ENCODE measurements at regions of chr3 and their contacts with region 1.

Region 1: DNA sequence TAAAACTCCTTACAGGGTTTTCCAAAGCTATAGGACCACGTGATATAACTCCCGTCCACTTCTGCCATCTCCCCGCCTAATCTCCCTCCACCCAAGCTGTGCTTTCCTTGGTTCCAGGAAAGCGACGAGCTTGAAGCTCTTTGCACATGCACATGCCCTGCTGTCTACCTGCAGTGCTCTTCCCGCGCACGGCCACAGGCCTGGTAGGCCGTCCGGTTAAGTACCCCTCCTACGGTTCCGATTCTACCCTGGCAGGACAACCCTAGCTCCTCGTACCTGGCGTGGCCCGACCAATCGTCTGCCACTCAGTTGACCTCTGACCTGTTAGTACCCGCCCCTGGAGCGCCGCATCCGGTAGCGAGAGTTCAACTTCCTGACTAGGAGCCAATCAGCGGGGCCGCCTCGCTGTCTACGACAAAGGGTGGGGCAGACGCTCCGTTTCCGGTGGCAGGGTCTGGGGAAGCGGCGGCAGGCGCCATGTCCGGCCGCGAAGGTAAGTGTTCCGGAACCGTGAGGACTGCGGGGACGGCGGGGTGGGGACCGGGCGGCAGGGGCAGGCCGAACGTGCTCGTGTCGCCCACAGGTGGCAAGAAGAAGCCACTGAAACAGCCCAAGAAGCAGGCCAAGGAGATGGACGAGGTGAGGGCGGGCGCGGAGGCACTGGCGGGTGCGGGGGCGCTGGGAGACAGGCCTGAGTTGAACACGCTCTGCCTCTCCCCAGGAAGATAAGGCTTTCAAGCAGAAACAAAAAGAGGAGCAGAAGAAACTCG is at the starts of genes CCDC51 and TMA7:
- DNase-seq: peak; percentile 95 to 96
- H3K4me3 ChIP-seq: peak within 1 kb of the TSS; percentile 96
- H3K27ac ChIP-seq: peak within 1 kb of the TSS; percentile 46
- H3K4me1 ChIP-seq: peaks cover 11% of the 10 kb centered on the region
- H3K27me3 ChIP-seq: no peaks in the 10 kb centered on the region
- CTCF ChIP-seq: no peak
- total RNA-seq, gene CCDC51: 28.5 and 35.4 TPM in 2 replicates
- total RNA-seq, gene TMA7: 235 and 314 TPM in 2 replicates

Region 2: GRCh38 chr3:48039487-48040190 is 400.4 kb before region 1 on chr3:
- CTCF ChIA-PET with region 1: no interaction called
- POLR2A ChIA-PET with region 1: no interaction called
- intact Hi-C with region 1: no loop called
- DNase-seq: peak in 1 of 2 experiments; percentile 84
- H3K4me3 ChIP-seq: no peak overlapping the region
- H3K27ac ChIP-seq: peak overlapping the region; percentile 36; the same call in 1 of the 2 replicates
- H3K4me1 ChIP-seq: peaks cover 20% of the 10 kb centered on the region
- H3K27me3 ChIP-seq: no peaks in the 10 kb centered on the region
- CTCF ChIP-seq: no peak

Region 3: GRCh38 chr3:48130321-48130904 is 309.6 kb before region 1 on chr3:
- CTCF ChIA-PET with region 1: no interaction called
- POLR2A ChIA-PET with region 1: no interaction called
- intact Hi-C with region 1: no loop called
- DNase-seq: no peak
- H3K4me3 ChIP-seq: no peak overlapping the region
- H3K27ac ChIP-seq: no peak overlapping the region
- H3K4me1 ChIP-seq: no peaks in the 10 kb centered on the region
- H3K27me3 ChIP-seq: no peaks in the 10 kb centered on the region
- CTCF ChIP-seq: no peak

Region 4: DNA sequence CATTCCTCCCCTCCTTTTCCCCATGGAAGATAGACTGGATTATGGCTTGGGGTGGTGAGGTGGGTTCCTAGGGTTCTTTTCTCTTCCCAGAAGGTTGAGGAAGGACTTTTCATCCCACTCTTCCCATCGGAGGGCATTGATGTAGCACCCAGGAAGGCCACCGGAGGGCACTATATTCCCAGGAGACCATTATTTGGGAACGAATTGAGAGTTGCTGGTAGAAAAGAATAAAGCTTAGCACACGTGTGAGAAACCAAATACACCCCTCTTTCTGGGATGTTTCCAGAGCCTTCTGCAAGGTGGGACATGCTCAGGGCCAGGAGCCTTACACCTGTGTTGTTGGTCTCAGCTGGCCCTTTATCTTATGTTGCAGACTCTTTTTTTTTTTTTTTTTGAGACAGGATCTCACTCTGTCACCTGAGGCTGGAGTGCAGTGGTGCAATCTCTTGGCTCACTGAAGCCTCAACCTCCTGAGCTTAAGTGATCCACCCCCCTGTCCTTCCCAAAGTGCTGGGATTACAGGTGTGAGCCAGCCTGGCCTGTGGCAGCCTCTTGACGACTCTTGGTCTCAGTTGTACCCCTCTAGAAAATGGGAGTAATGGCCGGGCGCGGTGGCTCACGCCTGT is 245.4 kb before region 1 on chr3:
- CTCF ChIA-PET with region 1: interaction called, 34 read pairs
- POLR2A ChIA-PET with region 1: interaction called, 7 read pairs
- intact Hi-C with region 1: loop called (anchors 1 kb)
- DNase-seq: peak; percentile 55 to 75
- H3K4me3 ChIP-seq: no peak overlapping the region
- H3K27ac ChIP-seq: no peak overlapping the region
- H3K4me1 ChIP-seq: no peaks in the 10 kb centered on the region
- H3K27me3 ChIP-seq: no peaks in the 10 kb centered on the region
- CTCF ChIP-seq: peak; percentile 84

Region 5: GRCh38 chr3:48232734-48233133 is 207.3 kb before region 1 on chr3:
- CTCF ChIA-PET with region 1: interaction called, 3 read pairs
- POLR2A ChIA-PET with region 1: no interaction called
- intact Hi-C with region 1: loop called (anchors 1 kb)
- DNase-seq: peak; percentile 64 to 69
- H3K4me3 ChIP-seq: no peak overlapping the region; the same call in 1 of the 2 replicates
- H3K27ac ChIP-seq: no peak overlapping the region
- H3K4me1 ChIP-seq: 0 out of 2 replicates have a peak, but pooled peaks cover 15% of the 10 kb centered on the region
- H3K27me3 ChIP-seq: no peaks in the 10 kb centered on the region
- CTCF ChIP-seq: peak; percentile 59; the same call in 1 of the 2 replicates

Region 6: DNA sequence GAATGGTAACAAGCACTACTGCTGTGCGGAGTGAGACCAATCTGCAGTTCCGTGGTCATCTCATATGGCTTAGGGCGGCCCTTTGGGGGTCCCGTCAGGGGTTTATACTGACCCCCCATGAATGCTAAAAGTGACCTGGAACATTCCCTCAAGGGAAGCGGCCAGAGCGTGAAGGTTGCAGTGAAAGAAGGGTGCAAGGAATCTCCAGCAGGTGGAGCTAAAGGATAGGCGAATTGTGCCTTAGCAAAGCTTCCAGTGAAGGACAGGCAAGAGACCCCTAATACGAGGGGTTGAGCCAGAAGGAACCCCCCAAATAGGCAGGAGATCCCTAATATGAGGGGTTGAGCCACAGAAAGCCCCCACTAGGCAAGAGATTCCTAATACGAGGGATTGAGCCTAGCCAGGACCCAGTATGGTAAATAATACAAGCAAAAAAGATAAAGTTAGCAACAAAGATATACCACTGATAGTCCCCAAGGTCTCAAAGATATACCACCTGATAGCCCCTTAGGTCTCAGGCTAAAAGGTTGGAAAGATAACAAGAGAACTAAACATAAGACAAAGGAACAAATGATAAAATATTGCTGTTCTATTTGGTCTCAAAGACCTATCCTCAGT is 166.3 kb before region 1 on chr3:
- CTCF ChIA-PET with region 1: interaction called, 50 read pairs
- POLR2A ChIA-PET with region 1: interaction called, 24 read pairs
- intact Hi-C with region 1: loop called (anchors 1 kb)
- DNase-seq: peak; percentile 44 to 53
- H3K4me3 ChIP-seq: no peak overlapping the region
- H3K27ac ChIP-seq: no peak overlapping the region
- H3K4me1 ChIP-seq: peaks cover 19% of the 10 kb centered on the region
- H3K27me3 ChIP-seq: no peaks in the 10 kb centered on the region
- CTCF ChIP-seq: peak; percentile 81

Region 7: GRCh38 chr3:48400824-48401433 is 39.1 kb before region 1 on chr3:
- CTCF ChIA-PET with region 1: interaction called, 126 read pairs
- POLR2A ChIA-PET with region 1: interaction called, 8 read pairs
- intact Hi-C with region 1: loop called (anchors 1 kb)
- DNase-seq: peak; percentile 60 to 61
- H3K4me3 ChIP-seq: no peak overlapping the region
- H3K27ac ChIP-seq: no peak overlapping the region
- H3K4me1 ChIP-seq: peaks cover 7% of the 10 kb centered on the region; the same call in 1 of the 2 replicates
- H3K27me3 ChIP-seq: no peaks in the 10 kb centered on the region
- CTCF ChIP-seq: peak; percentile 82

Region 8: GRCh38 chr3:48663415-48664312 is 223.7 kb after region 1 on chr3:
- CTCF ChIA-PET with region 1: interaction called, 3 read pairs
- POLR2A ChIA-PET with region 1: no interaction called
- intact Hi-C with region 1: loop called (anchors 5 kb)
- DNase-seq: peak; percentile 93 to 98
- H3K4me3 ChIP-seq: peak overlapping the region; percentile 76
- H3K27ac ChIP-seq: peak overlapping the region; percentile 93
- H3K4me1 ChIP-seq: 0 out of 2 replicates have a peak, but pooled peaks cover 4% of the 10 kb centered on the region
- H3K27me3 ChIP-seq: no peaks in the 10 kb centered on the region
- CTCF ChIP-seq: peak; percentile 78

Measured in PC-9 (cell line).